ENCODE measurements at regions of chr12 and their contacts with region 1.

Region 1: GRCh38 chr12:949453-950191 is at the start of gene RAD52:
- DNase-seq: peak; percentile 99
- H3K4me3 ChIP-seq: peak within 1 kb of the TSS; percentile 68 to 84 (median 78)
- H3K27ac ChIP-seq: peak within 1 kb of the TSS; percentile 89 to 96 (median 94)
- H3K4me1 ChIP-seq: peaks cover 0 to 21% (median 11%) of the 10 kb centered on the region in 4 donors
- H3K27me3 ChIP-seq: no peaks in the 10 kb centered on the region
- CTCF ChIP-seq: peak; percentile 87 to 99 (median 99)
- EP300 ChIP-seq: peak in 1 of 4 donors; percentile 77
- POLR2A ChIP-seq: peak; percentile 47 to 70
- total RNA-seq, gene RAD52: 12.8 to 41.8 (median 18.5) TPM

Region 2: GRCh38 chr12:468671-469389 is 480.8 kb before region 1 on chr12:
- intact Hi-C with region 1: no loop called
- DNase-seq: no peak
- H3K4me3 ChIP-seq: no peak overlapping the region
- H3K27ac ChIP-seq: no peak overlapping the region
- H3K4me1 ChIP-seq: no peaks in the 10 kb centered on the region
- H3K27me3 ChIP-seq: peaks cover 0 to 4% (median 0%) of the 10 kb centered on the region in 3 donors
- CTCF ChIP-seq: no peak
- EP300 ChIP-seq: no peak
- POLR2A ChIP-seq: no peak

Region 3: DNA sequence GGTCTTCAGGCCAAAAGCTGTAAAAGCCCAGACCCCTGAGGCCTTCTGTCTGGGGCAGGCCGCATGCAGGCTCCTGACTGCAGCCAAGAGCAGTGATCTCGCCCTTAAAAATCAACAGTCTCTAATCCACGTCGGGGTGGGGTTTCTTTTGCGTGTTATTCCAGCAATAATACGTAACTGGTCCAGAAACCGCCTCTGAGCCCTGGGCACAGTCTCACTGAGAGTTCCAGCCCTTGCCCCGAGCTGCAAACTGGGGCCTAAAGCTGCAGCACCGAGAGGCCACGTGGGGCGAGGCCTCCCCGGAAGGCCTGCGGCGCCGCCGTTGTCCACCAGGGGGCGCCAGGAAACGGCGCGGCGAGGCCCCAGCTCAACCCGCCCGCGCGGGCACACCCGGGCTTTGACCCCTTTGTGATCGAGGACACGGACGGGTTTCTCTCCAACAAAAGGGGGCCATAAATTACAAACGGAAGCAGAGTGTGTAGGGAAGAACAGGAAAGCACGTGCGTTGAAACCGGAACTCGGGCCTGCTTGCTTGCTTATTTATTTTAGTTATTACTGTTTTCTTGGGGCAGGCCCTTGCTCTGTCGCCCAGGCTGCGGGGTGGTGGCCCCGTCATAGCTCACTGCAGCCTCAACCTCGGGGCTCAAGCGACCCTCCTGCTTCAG is 373.5 kb before region 1 on chr12:
- intact Hi-C with region 1: loop called (anchors 2 kb)
- DNase-seq: peak; percentile 87
- H3K4me3 ChIP-seq: peak overlapping the region in 2 of 4 donors; percentile 12 to 13
- H3K27ac ChIP-seq: peak overlapping the region; percentile 52 to 64 (median 64)
- H3K4me1 ChIP-seq: peaks cover 0 to 34% (median 30%) of the 10 kb centered on the region in 4 donors
- H3K27me3 ChIP-seq: no peaks in the 10 kb centered on the region
- CTCF ChIP-seq: peak; percentile 94 to 99 (median 97)
- EP300 ChIP-seq: no peak
- POLR2A ChIP-seq: no peak

Region 4: DNA sequence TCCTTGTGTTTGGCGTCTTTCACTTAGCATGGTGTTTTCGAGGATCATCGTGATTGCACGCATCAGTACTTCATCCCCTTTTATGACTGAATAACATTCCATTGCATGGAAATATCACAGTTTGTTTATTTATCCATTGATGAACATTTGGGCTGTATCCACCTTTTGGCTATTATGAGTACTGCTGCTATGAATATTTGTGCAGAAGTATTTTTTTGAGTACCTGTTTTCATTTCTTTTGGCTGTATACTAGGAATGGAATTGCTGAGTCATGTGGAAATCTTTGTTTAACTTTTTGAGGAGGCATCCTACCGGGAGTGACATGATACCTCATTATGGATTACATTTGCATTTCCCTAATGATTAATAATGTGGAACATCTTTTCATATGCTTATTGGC is 130.9 kb before region 1 on chr12:
- intact Hi-C with region 1: loop called (anchors 2 kb)
- DNase-seq: no peak
- H3K4me3 ChIP-seq: no peak overlapping the region
- H3K27ac ChIP-seq: peak overlapping the region in 3 of 4 donors; percentile 4 to 46 (median 30)
- H3K4me1 ChIP-seq: peaks cover 0 to 33% (median 14%) of the 10 kb centered on the region in 4 donors
- H3K27me3 ChIP-seq: no peaks in the 10 kb centered on the region
- CTCF ChIP-seq: peak in 1 of 4 experiments; percentile 12
- EP300 ChIP-seq: no peak
- POLR2A ChIP-seq: no peak

Region 5: GRCh38 chr12:1093166-1093751 is 143.6 kb after region 1 on chr12:
- intact Hi-C with region 1: loop called (anchors 10 kb)
- DNase-seq: no peak
- H3K4me3 ChIP-seq: no peak overlapping the region
- H3K27ac ChIP-seq: no peak overlapping the region
- H3K4me1 ChIP-seq: peaks cover 0 to 20% (median 9%) of the 10 kb centered on the region in 4 donors
- H3K27me3 ChIP-seq: no peaks in the 10 kb centered on the region
- CTCF ChIP-seq: peak; percentile 46 to 70 (median 62)
- EP300 ChIP-seq: no peak
- POLR2A ChIP-seq: no peak